Caco-2 (cell line): ENCODE measurements at regions of chr14 and their contacts with region 1.

Region 1: DNA sequence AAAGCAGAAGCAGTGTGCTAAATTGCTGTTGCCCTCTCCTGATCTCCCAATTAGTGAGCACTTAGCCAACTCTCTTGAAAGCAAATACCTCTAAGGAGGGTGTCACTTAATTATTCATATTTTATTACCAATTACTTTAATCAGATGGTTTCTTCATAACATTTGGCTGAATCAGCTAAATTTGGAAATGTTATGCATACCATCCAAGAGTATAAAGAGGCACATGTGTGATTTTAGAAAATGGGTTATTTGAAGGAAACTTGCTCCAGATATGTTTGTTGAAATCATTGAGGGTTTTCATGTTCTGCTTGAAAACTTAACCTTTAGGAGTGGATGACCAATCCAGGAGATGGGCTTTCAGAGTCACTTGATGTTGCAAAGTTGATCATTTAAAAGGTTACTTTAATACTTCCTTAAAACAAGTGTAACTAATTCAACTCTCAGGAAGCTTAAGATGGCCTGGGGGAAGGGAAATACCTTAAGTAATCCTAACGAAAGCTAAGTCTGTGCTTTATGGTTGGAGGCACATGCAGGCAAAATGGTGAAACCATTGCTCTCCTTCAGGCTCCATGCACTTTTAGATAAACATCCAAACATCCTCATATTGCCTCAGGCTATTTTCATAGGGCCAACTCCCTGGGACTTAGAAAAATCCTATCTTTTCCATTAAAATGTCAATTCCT is 434.5 kb downstream of the MDGA2 start:
- DNase-seq: no peak
- H3K4me3 ChIP-seq: no peak overlapping the region
- H3K4me3 Mint-ChIP-seq: no peak overlapping the region
- H3K27ac Mint-ChIP-seq: no peak overlapping the region
- H3K4me1 ChIP-seq: no peaks in the 10 kb centered on the region
- H3K4me1 Mint-ChIP-seq: no peaks in the 10 kb centered on the region
- H3K27me3 ChIP-seq: no peaks in the 10 kb centered on the region
- H3K27me3 Mint-ChIP-seq: no peaks in the 10 kb centered on the region
- CTCF ChIP-seq: no peak

Region 2: GRCh38 chr14:47223656-47224055 is 17.2 kb before region 1 on chr14:
- CTCF ChIA-PET with region 1: no interaction called
- POLR2A ChIA-PET with region 1: no interaction called
- intact Hi-C with region 1: loop called (anchors 1 kb)
- DNase-seq: no peak
- H3K4me3 ChIP-seq: no peak overlapping the region
- H3K4me3 Mint-ChIP-seq: no peak overlapping the region
- H3K27ac Mint-ChIP-seq: no peak overlapping the region
- H3K4me1 ChIP-seq: no peaks in the 10 kb centered on the region
- H3K4me1 Mint-ChIP-seq: no peaks in the 10 kb centered on the region
- H3K27me3 ChIP-seq: no peaks in the 10 kb centered on the region
- H3K27me3 Mint-ChIP-seq: no peaks in the 10 kb centered on the region
- CTCF ChIP-seq: no peak